ENCODE measurements at regions of chr17 and their contacts with region 1.

Region 1: GRCh38 chr17:49191917-49192741 is 18.2 kb downstream of the GNGT2 start:
- DNase-seq: peak; percentile 93
- H3K4me3 Mint-ChIP-seq: peak overlapping the region; percentile 96
- H3K27ac Mint-ChIP-seq: peak overlapping the region; percentile 96
- H3K4me1 Mint-ChIP-seq: no peaks in the 10 kb centered on the region
- H3K27me3 Mint-ChIP-seq: no peaks in the 10 kb centered on the region
- CTCF ChIP-seq: peak; percentile 21

Region 2: GRCh38 chr17:48908047-48908843 is 283.9 kb before region 1 on chr17 and contains the start of gene UBE2Z:
- CTCF ChIA-PET with region 1: no interaction called
- POLR2A ChIA-PET with region 1: interaction called, 4 read pairs
- intact Hi-C with region 1: loop called (anchors 5 kb)
- DNase-seq: peak; percentile 93
- H3K4me3 Mint-ChIP-seq: peak within 1 kb of the TSS; percentile 93
- H3K27ac Mint-ChIP-seq: peak within 1 kb of the TSS; percentile 95
- H3K4me1 Mint-ChIP-seq: peaks cover 32% of the 10 kb centered on the region
- H3K27me3 Mint-ChIP-seq: no peaks in the 10 kb centered on the region
- CTCF ChIP-seq: no peak
- total RNA-seq, gene UBE2Z: 106 and 115 TPM in 2 replicates

Region 3: DNA sequence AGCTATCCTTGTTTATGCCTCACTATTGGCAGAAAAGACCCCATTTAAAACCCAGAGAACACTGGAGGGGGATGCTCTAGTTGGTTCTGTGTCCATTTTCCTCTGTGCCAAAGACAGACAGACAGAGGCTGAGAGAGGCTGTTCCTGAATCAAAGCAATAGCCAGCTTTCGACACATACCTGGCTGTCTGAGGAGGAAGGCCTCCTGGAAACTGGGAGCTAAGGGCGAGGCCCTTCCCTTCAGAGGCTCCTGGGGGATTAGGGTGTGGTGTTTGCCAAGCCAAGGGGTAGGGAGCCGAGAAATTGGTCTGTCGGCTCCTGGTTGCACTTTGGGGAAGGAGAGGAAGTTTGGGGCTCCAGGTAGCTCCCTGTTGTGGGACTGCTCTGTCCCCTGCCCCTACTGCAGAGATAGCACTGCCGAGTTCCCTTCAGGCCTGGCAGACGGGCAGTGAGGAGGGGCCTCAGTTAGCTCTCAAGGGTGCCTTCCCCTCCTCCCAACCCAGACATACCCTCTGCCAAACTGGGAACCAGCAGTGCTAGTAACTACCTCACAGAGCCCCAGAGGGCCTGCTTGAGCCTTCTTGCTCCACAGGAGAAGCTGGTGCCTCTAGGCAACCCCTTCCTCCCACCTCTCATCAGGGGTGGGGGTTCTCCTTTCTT is 138.8 kb before region 1 on chr17:
- CTCF ChIA-PET with region 1: no interaction called
- POLR2A ChIA-PET with region 1: interaction called, 5 read pairs
- intact Hi-C with region 1: loop called (anchors 10 kb)
- DNase-seq: no peak
- H3K4me3 Mint-ChIP-seq: no peak overlapping the region
- H3K27ac Mint-ChIP-seq: no peak overlapping the region
- H3K4me1 Mint-ChIP-seq: no peaks in the 10 kb centered on the region
- H3K27me3 Mint-ChIP-seq: no peaks in the 10 kb centered on the region
- CTCF ChIP-seq: no peak

Region 4: GRCh38 chr17:49117587-49118230 is 74.4 kb before region 1 on chr17:
- CTCF ChIA-PET with region 1: no interaction called
- POLR2A ChIA-PET with region 1: interaction called, 28 read pairs
- intact Hi-C with region 1: no loop called
- DNase-seq: peak; percentile 66
- H3K4me3 Mint-ChIP-seq: no peak overlapping the region
- H3K27ac Mint-ChIP-seq: no peak overlapping the region
- H3K4me1 Mint-ChIP-seq: peaks cover 16% of the 10 kb centered on the region
- H3K27me3 Mint-ChIP-seq: no peaks in the 10 kb centered on the region
- CTCF ChIP-seq: no peak

Region 5: DNA sequence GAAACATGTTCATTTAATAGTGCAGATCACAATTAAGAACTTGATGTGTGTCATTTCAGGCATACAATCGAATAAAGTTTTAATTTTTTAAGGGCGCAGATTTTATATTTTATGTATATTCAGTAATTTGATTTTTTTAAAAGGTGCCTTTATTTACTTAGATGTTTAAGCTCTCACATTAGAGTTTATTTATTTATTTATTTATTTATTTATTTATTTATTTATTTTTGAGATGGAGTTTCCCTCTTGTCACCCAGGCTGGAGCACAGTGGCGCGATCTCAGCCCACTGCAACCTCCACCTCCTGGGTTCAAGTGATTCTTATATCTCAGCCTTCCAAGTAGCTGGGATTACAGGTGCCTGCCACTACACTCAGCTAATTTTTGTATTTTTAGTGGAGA is 55.8 kb before region 1 on chr17:
- CTCF ChIA-PET with region 1: no interaction called
- POLR2A ChIA-PET with region 1: no interaction called
- intact Hi-C with region 1: no loop called
- DNase-seq: no peak
- H3K4me3 Mint-ChIP-seq: no peak overlapping the region
- H3K27ac Mint-ChIP-seq: no peak overlapping the region
- H3K4me1 Mint-ChIP-seq: peaks cover 5% of the 10 kb centered on the region
- H3K27me3 Mint-ChIP-seq: no peaks in the 10 kb centered on the region
- CTCF ChIP-seq: no peak